ENCODE measurements at regions of chr1 and their contacts with region 1.

Region 1: DNA sequence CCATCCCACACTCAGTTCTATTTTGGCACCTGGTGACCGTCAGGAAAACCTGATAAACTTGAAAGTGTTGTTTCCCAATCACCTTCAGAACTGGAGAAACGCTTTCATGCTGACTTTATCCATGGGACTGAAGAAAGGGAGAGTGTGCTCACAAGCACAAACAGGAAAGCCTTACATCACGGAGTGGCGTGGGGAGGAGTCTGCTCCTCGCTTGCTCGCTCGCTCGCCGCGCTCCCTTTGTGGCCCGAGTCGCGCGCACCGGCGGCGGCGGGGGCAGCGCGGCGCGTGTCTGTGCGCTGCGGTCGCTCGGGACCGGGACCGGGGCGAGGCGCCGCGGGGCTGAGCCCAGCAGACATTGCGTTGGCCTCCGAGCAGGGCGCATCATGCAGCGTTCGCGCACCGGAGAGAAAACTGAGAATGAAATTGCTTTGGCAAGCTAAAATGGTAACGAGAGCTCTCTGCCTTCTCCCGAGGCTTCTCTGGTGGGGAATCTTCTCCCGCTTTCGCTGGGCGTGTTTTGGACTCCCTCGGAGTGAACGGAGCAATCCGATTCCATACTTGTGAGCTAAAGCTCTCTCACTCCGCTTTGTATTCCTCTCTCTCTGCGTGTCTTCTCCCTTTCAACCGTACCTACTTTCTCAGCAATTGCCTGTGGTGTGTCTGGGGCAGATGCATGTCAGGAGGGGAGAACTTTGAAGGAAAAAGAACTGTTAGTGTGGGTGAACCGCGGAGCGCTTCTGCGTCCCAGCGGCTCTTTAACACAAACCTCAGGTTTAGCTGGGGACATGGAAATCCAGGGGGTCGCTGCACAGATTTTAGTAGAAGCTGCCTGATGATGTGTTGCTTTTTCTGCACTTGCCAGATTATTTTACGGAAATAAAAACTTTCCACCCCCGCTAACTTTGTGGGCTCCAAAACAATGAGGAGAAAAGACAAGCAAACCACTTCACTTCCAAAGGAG is at the start of gene RGL1:
- DNase-seq: peak; percentile 22
- H3K4me3 Mint-ChIP-seq: peak within 1 kb of the TSS; percentile 83
- H3K27ac Mint-ChIP-seq: peak within 1 kb of the TSS; percentile 6
- H3K4me1 Mint-ChIP-seq: peaks cover 34% of the 10 kb centered on the region
- H3K27me3 Mint-ChIP-seq: peaks cover 3% of the 10 kb centered on the region
- total RNA-seq, gene RGL1: 2.7 and 2.8 TPM in 2 replicates

Region 2: DNA sequence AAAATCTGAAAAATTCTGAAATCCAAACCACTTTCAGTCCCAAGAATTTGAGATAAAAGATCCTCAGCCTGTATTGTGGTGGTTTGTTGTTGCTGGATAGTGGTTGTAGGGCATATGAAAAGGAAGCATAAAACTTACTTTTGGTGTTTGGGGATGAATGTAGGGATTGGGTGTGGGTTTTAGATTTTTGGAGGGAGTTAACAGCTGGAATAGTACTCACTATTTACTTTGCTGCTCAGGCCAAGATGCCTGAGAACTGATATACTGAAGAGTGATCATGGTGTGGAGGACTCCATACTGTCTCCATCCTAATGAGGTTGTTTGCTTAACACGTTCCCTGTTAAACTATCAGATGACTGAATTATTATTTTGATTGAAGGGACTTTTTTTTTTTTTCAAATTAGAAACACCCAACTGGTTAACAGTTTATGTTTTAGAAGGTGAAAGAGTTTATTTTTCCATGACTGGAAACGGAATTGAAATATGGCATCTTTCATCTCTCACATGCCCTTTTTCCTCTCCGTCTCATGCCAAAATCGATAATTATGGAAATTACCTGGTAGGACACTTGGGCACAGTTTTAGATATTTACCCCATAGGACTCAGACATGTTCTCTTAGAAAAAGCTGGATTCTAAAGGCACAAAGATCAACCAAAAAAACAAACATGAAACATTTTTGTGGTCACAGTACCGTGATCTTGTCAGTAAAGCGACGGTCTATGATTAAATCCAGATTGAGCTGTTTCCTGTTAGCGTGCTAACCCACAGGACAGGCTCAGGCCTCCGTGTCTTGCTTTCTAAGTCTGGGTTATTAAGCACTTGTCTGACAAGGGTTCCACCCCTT is 37.0 kb after region 1 on chr1:
- intact Hi-C with region 1: loop called (anchors 1 kb)
- DNase-seq: peak; percentile 20
- H3K4me3 Mint-ChIP-seq: peak overlapping the region; percentile 71
- H3K27ac Mint-ChIP-seq: peak overlapping the region; percentile 89
- H3K4me1 Mint-ChIP-seq: peaks cover 33% of the 10 kb centered on the region
- H3K27me3 Mint-ChIP-seq: no peaks in the 10 kb centered on the region

Measured in activated T-helper 1 cell treated with anti-CD3 and anti-CD28 coated beads, Interleukin-12 subunit alpha, Interleukin-12 subunit beta, Interleukin-2, Interleukin-4 antibody, amounts not matched to agents 30 ng/mL and 10 ng/mL and 1 ng/mL, durations not matched to agents 14 hours and 24 hours and 36 hours (primary cell).